Aorta (tissue), 5 donors: ENCODE measurements at regions of chr10 and their contacts with region 1.

Region 1: GRCh38 chr10:113126229-113127201 is 176.5 kb downstream of the TCF7L2 start:
- DNase-seq: peak; percentile 76 to 90
- ATAC-seq: peak; percentile 95
- H3K4me3 ChIP-seq: peak overlapping the region; percentile 42 to 67
- H3K27ac ChIP-seq: no peak overlapping the region
- H3K4me1 ChIP-seq: peaks cover 0 to 2% of the 10 kb centered on the region in 2 donors
- H3K27me3 ChIP-seq: no peaks in the 10 kb centered on the region

Region 2: DNA sequence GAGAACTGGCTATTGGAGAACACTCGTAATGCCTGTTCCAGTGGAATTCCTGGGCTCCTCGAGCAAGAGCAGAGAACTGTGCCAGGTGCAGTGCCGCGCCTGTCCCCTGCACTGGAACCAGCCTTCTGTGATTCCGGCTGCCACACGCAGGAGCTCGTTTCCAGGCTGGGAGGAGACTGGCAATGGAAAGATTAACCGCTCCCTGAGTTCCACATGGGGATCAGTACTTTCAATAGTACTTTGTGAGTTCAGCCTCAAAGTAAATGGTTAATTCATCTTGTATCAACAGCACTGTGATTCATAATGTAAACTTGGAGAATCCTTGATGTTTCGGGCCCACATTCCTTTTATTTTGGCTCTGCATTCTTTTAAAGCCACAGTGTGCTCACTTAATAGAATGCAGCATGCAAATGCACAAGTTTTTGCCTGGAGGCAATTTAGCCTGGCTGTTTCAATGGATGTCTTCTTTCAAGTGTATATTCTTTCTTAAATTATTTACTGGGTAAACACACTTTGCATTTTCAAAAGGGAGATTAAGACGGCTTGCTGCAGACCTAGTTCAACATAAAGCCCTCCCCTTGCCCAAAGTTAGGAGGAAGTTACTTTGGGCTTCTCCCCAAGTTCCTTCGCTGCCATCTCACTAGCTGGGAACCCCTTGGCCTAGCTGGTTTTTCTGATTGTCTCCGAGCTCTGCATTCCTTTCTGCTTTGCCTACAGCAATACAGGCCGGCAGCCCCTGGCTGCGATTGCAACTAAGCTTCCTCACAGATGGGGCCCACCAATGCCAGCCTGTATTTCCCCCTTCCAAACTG is 314.6 kb before region 1 on chr10:
- intact Hi-C with region 1: loop called in 1 of 2 experiments (anchors 10 kb)
- DNase-seq: peak; percentile 87 to 88
- ATAC-seq: peak; percentile 85
- H3K4me3 ChIP-seq: no peak overlapping the region
- H3K27ac ChIP-seq: peak overlapping the region in 1 of 2 donors; percentile 39
- H3K4me1 ChIP-seq: no peaks in the 10 kb centered on the region
- H3K27me3 ChIP-seq: no peaks in the 10 kb centered on the region

Region 3: GRCh38 chr10:112955582-112956421 is 170.7 kb before region 1 on chr10:
- intact Hi-C with region 1: loop called (anchors 5 kb)
- DNase-seq: no peak
- ATAC-seq: no peak
- H3K4me3 ChIP-seq: peak overlapping the region; percentile 32 to 71
- H3K27ac ChIP-seq: no peak overlapping the region
- H3K4me1 ChIP-seq: peaks cover 2 to 11% of the 10 kb centered on the region in 2 donors
- H3K27me3 ChIP-seq: no peaks in the 10 kb centered on the region